Posterior cingulate gyrus (tissue), 11 donors: ENCODE measurements at regions of chr1 and their contacts with region 1.

Region 1: DNA sequence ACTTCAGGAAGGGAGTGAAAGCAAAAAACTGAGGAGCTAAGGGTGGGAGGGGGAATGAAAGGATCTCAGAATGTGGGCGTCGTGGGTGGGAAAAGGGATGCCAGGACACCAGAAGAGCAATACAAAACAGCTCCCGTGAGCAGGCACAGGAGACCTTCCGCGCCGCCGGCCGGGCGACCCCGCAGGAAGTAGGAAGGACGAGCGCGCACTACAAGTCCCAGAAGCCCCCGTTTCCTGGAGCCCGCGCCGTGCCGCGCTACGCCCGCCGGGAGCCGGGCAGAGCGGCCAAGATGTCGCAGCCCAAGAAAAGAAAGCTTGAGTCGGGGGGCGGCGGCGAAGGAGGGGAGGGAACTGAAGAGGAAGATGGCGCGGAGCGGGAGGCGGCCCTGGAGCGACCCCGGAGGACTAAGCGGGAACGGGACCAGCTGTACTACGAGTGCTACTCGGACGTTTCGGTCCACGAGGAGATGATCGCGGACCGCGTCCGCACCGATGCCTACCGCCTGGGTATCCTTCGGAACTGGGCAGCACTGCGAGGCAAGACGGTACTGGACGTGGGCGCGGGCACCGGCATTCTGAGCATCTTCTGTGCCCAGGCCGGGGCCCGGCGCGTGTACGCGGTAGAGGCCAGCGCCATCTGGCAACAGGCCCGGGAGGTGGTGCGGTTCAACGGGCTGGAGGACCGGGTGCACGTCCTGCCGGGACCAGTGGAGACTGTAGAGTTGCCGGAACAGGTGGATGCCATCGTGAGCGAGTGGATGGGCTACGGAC is at the start of gene PRMT6:
- DNase-seq: peak; percentile 70 to 97 (median 82)

Region 2: DNA sequence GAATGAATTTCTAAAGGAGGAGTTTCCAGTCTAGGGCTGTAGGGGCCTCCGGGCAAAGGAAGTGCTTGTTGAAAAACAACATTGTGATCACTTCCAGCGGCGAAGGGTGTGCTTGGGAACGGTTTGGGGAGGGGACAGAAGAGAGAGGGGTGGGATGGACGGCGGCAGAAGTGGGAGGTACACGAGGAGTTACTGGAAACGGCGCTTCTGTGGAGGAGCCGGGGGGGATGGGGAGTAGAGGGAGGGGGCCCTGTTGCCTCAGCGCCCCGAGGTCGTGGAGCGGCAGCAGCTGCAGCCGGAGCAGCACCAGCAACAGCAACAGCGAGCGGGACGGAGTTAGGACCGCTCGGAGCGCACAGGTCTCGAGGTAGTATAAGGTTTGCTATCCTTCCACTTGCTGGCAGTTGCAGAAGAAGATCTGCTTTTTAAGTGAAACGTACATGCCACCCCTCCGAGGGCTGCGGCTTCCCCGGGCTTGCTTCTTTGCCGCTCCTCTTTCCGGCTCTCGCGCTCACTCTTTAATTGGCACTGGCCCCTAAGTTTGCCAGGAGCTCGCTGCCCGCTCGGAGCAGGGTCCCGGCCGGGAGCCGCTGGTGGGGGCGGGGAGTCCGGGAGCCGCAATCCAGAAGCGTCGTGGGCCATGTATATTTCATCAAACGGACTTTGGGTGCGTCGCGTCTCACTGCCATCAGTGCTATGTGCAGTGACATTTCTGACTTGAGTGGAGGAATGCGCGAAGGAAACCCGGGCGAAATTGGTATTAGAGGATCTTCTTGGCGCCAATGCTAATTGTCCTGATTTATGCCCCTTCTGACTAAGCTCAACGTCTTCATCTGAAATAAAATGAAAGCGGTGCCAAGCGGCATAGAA is 83.5 kb after region 1 on chr1:
- intact Hi-C with region 1: loop called (anchors 1 kb)
- DNase-seq: peak in 9 of 10 donors; percentile 21 to 89 (median 33)